ENCODE measurements at regions of chr19 and their contacts with region 1.

Region 1: DNA sequence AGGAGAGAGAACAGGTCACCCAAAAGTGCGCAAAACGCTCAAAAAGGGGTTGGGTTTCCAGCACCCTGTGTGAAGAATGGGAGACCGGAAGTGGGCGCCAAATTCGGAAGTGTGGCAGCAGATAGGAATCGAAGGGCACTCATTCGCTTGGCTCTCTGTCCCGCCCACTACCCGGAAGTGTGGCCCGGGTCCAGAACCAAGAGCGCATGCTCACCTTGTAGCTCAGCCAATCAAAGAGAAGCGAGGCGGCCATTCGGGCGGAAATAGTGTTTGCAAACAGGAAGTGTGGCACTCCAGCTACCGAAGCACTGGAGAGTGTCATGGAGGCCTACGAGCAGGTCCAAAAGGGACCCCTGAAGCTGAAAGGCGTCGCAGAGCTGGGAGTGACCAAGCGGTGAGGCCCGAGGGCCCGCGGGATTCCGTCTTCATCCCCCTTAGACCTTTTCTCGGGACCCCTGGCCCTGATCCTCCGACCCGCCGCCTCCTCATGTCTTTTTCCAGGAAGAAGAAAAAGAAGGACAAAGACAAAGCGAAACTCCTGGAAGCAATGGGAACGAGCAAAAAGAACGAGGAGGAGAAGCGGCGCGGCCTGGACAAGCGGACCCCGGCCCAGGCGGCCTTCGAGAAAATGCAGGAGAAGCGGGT is at the start of gene FAM32A:
- DNase-seq: peak; percentile 98 to 99
- H3K4me3 ChIP-seq: peak within 1 kb of the TSS; percentile 87
- H3K27ac ChIP-seq: peak within 1 kb of the TSS; percentile 19; the same call in 1 of the 2 replicates
- H3K4me1 ChIP-seq: peaks cover 25% of the 10 kb centered on the region
- H3K27me3 ChIP-seq: no peaks in the 10 kb centered on the region
- CTCF ChIP-seq: no peak
- total RNA-seq, gene FAM32A: 44.3 and 66.5 TPM in 2 replicates

Region 2: GRCh38 chr19:15629003-15629880 is 556.0 kb before region 1 on chr19:
- CTCF ChIA-PET with region 1: no interaction called
- POLR2A ChIA-PET with region 1: no interaction called
- intact Hi-C with region 1: loop called (anchors 2 kb)
- DNase-seq: peak; percentile 69 to 80
- H3K4me3 ChIP-seq: no peak overlapping the region
- H3K27ac ChIP-seq: no peak overlapping the region
- H3K4me1 ChIP-seq: 0 out of 2 replicates have a peak, but pooled peaks cover 3% of the 10 kb centered on the region
- H3K27me3 ChIP-seq: no peaks in the 10 kb centered on the region
- CTCF ChIP-seq: peak; percentile 100

Region 3: DNA sequence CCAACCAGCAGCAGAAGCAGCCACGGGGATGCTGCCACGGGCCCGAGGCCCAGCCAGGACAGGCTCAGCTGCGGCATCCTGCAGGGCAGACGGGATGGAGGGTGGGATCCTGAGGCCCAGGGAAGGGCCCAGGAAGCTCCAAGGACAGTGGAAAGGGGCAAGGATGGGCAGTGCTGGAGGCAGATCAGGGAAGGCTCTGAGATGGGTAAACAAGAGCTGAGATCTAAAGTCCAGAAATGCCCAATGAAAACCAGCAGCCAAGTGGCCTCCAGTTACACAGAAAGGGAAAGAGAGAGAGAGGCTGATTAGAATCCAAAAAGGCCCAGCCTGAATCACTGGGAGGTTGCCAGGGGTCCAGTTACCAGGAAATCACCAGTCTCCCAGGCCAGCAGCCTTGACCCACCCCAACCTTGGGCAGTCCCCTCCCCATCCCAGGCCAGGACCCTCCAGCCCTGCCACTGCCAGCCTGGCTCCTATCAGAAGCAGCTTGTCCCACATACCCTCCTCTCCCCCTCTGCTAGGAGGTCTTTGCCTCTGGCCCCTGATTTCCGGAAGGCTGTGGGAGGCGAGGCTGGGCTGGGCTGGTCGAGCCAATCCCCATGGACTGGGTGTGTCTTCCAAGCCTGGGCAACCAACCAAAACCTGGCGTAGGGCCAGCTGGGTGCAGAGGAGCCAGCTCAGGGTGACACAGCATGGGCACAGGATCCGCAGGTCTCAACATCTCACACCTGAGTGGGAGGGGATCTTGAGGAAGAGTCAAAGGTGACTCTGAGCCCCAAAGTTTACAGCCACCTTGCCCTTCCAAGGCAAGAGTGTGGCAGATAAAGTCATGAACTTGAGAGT is 250.7 kb before region 1 on chr19 and contains the start of gene CYP4F11:
- CTCF ChIA-PET with region 1: no interaction called
- POLR2A ChIA-PET with region 1: no interaction called
- intact Hi-C with region 1: loop called (anchors 10 kb)
- DNase-seq: peak; percentile 96 to 98
- H3K4me3 ChIP-seq: peak within 1 kb of the TSS; percentile 83
- H3K27ac ChIP-seq: peak within 1 kb of the TSS; percentile 96
- H3K4me1 ChIP-seq: peaks cover 14% of the 10 kb centered on the region
- H3K27me3 ChIP-seq: no peaks in the 10 kb centered on the region
- CTCF ChIP-seq: no peak
- total RNA-seq, gene CYP4F11: 152 and 187 TPM in 2 replicates

Region 4: DNA sequence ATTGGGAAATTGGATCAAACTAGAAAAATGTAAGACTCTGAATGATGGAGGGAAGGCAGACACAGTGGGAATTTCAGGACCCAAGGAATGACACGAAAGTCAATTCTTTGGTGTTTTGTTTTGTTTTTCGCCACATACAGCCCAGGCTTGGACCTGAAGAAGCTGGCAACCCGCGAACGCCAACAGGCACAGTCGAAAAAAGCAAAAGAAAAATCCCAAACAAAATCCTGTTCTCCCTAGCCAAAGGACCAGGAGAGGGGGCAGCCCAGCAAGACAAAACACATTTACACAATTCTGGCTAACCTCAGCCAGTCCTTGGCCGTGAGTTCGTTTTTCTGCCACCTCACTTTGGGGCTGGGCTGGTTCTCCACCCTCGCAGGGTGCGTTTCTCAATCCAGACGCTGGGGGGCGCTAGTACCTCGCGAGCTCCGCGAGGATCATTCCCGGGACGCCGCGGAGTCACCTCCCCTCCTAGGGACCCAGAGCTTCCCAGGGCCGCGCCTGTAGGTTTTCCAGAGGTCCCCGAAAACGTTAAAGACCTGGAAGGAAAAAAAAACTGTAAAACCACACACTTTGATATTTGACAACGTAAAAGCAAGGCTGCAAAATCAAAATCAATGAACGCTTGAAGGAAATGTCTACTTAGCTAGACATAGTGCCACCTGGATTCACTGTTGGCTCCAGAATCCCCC is 143.8 kb before region 1 on chr19:
- CTCF ChIA-PET with region 1: no interaction called
- POLR2A ChIA-PET with region 1: interaction called, 28 read pairs
- intact Hi-C with region 1: loop called (anchors 1 kb)
- DNase-seq: peak; percentile 63 to 82
- H3K4me3 ChIP-seq: no peak overlapping the region
- H3K27ac ChIP-seq: no peak overlapping the region
- H3K4me1 ChIP-seq: peaks cover 4% of the 10 kb centered on the region; the same call in 1 of the 2 replicates
- H3K27me3 ChIP-seq: no peaks in the 10 kb centered on the region
- CTCF ChIP-seq: peak; percentile 100

Region 5: DNA sequence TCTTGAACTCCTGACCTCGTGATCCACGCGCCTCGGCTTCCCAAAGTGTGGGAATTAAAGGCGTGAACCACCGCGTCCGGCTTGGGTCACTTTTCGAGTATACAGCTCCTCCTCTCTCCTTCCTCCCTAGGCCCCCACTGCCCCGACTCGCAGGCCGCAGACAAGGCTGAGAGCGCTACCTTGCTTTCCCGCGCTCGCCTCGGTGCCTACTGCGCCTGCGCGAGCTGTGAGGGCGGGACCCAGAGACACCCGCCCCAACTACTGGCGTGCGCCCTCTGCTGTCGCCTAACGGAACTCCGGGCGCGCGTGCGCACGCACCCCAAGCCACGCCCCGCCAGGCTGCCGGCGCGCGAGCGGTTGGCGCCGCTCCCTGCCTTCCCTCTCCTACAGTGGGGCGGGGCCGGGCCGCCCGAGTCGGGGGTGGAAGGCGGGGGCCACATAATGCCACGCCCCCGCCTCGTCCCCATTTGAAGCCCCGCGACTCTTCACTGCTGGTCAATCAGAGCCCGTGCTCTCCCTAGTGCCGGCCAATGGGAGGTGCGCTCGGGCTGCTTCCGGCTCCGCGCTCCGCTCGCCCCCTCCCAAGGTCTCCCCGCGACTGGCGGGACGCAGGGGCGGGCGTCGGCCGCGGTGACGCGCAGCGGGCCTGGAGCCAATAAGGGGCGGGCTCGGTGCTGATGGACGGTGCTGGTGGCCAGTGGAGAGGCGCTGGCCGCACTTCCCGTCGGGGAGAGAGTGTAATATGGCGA is 73.9 kb before region 1 on chr19 and contains the start of gene RAB8A:
- CTCF ChIA-PET with region 1: interaction called, 3 read pairs
- POLR2A ChIA-PET with region 1: interaction called, 3 read pairs
- intact Hi-C with region 1: loop called (anchors 1 kb)
- DNase-seq: peak; percentile 97 to 99
- H3K4me3 ChIP-seq: peak within 1 kb of the TSS; percentile 97
- H3K27ac ChIP-seq: peak within 1 kb of the TSS; percentile 72
- H3K4me1 ChIP-seq: peaks cover 12% of the 10 kb centered on the region
- H3K27me3 ChIP-seq: no peaks in the 10 kb centered on the region
- CTCF ChIP-seq: peak; percentile 92
- total RNA-seq, gene RAB8A: 87.9 and 104 TPM in 2 replicates

Region 6: GRCh38 chr19:16197622-16198369 is 12.6 kb after region 1 on chr19 and contains the start of gene AP1M1:
- CTCF ChIA-PET with region 1: interaction called, 8 read pairs
- POLR2A ChIA-PET with region 1: interaction called, 20 read pairs
- intact Hi-C with region 1: no loop called
- DNase-seq: peak; percentile 95 to 99
- H3K4me3 ChIP-seq: peak within 1 kb of the TSS; percentile 77
- H3K27ac ChIP-seq: peak within 1 kb of the TSS; percentile 52
- H3K4me1 ChIP-seq: peaks cover 25% of the 10 kb centered on the region
- H3K27me3 ChIP-seq: no peaks in the 10 kb centered on the region
- CTCF ChIP-seq: no peak
- total RNA-seq, gene AP1M1: 27.5 and 52.8 TPM in 2 replicates

Measured in PC-9 (cell line).